GM10248 (cell line): ENCODE measurements at regions of chr13 and their contacts with region 1.

Region 1: DNA sequence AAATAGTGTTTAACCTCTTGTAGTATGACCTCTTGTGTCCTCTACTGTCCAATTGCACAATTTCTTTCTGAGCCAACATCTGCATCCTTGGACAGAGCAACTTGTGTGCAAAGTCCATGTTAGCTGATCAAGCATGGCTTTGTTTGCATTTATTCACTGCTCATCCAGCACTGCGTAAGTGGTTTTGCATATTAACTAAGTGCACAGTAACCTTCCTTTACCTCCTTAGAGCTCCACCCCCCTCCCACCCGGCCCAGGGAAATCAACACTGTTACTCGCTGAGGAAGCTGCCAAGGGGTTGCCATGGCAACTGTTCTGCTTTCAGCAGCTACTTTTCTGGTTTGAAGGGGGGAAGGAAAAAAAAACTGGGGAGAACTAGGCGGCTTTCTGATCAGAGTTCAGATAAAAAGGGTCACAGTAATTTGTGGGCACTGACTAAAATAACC is 153.5 kb upstream of the KLF12 start:
- DNase-seq: peak; percentile 30
- CTCF ChIP-seq: no peak

Region 2: DNA sequence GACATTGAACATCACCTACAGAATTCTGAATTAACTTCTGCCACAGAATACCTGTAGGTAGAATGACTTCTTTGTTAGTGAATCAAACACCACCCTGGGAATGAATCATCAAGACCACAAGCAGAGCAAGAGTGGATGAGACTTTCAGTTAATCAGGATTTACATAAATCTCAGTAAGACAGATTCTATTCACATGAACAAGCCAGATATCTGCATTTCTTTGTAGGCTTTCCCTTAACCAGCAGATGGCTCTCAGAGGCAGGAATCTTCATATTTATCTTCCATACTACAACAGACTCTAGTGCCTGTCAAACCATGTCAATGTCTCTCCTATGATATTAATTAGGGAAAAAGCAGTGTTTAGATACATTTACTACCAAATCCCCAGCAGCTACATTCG is 565.6 kb before region 1 on chr13:
- CTCF ChIA-PET with region 1: interaction called, 10 read pairs
- POLR2A ChIA-PET with region 1: no interaction called
- DNase-seq: peak; percentile 26
- CTCF ChIP-seq: peak; percentile 9

Region 3: DNA sequence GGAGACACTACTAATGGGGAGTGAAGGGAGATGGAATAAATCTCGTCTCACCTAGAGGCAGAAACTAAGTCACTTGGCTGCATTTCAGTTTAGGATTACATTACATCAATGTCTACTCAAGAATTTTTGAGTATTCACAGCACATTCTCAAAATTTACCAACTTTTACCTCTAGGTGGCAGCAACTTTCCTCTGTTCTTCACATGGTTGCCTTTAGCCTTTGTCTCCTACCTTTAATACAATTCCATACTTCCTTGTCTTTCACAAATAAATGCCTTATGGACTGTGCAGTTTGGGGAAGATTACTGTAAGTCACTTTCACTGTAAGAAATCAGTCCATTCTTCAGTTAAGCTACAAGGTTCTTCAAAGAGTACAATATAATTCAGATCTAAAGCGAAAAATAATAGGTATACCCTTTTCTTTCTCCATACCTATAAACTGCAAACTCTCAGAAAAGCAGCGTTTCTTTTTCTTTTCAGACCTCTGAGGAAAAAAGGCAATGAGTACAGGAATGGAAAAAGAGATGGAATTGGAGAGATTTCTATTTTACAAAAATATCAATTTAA is 532.9 kb before region 1 on chr13:
- CTCF ChIA-PET with region 1: interaction called, 24 read pairs
- POLR2A ChIA-PET with region 1: no interaction called
- DNase-seq: peak; percentile 31
- CTCF ChIP-seq: peak; percentile 61

Region 4: DNA sequence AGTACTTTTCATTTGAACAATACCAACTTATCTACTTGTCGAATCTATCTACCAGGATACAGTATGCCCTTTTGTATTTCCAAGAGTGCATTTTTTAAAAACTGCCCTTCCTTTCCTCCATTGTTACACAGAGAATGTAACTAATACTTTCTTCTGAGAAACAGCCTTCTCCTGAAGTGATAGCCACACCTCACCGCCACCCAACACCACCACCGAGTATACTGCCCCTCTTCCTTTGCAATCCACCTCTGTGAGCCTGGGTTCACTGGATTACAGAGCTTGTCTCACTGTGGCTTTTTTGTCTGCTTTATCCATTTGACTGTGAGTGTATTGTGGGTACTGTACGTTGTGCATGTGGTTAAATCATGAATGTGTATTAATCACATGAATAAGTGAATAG is 458.9 kb before region 1 on chr13:
- CTCF ChIA-PET with region 1: interaction called, 53 read pairs
- POLR2A ChIA-PET with region 1: no interaction called
- DNase-seq: no peak
- CTCF ChIP-seq: no peak

Region 5: GRCh38 chr13:73835138-73835721 is 452.5 kb before region 1 on chr13:
- CTCF ChIA-PET with region 1: interaction called, 53 read pairs
- POLR2A ChIA-PET with region 1: no interaction called
- DNase-seq: peak; percentile 42
- CTCF ChIP-seq: peak; percentile 39

Region 6: GRCh38 chr13:74062933-74063332 is 224.8 kb before region 1 on chr13:
- CTCF ChIA-PET with region 1: no interaction called
- POLR2A ChIA-PET with region 1: no interaction called
- DNase-seq: peak; percentile 39
- CTCF ChIP-seq: no peak

Region 7: GRCh38 chr13:74270018-74270417 is 17.7 kb before region 1 on chr13:
- CTCF ChIA-PET with region 1: interaction called, 30 read pairs
- POLR2A ChIA-PET with region 1: no interaction called
- DNase-seq: no peak
- CTCF ChIP-seq: no peak

Region 8: GRCh38 chr13:74298918-74299317 is 11.2 kb after region 1 on chr13:
- CTCF ChIA-PET with region 1: interaction called, 21 read pairs
- POLR2A ChIA-PET with region 1: no interaction called
- DNase-seq: no peak
- CTCF ChIP-seq: no peak